Activated B cell treated with CpG ODN at 0.5 μM for 24 hours (primary cell): ENCODE measurements at regions of chr11 and their contacts with region 1.

Region 1: DNA sequence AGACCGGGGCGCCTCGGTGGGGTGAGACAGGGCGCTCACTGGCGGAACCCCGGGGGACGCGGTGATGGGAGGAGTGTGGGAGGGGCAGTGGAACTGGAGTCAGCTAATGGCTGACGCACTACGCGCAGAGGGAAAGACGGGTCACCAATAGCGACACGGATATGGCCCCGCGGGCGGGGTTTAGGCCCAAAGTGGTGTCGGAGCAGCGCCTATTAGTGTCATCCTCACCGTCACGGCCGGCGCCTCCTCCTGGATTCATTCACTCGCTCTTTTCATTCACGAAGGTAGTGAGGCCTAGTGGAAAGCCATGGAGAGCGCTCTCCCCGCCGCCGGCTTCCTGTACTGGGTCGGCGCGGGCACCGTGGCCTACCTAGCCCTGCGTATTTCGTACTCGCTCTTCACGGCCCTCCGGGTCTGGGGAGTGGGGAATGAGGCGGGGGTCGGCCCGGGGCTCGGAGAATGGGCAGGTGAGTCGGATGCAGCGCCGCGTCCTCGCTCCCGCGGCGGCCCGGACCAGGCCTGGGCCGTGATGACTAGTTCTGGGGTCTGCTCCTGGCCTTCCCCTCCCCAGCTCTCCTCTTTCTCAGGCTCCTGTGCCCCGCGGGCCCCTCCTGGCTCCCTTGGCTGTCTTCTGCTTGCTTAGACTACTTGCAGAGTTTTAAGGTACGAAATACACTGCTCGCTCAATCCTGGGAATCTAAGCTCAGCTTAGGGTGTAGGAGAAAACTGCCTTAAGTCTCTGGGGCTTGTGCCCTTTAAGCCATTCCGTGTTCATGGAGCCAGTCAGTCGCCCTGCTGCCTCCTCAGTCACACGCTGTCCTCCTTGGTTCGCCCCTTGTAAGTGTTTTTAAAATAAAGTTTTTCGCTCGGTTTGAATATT is at the start of gene HSD17B12:
- DNase-seq: peak; percentile 96
- ATAC-seq: peak; percentile 96
- H3K4me3 Mint-ChIP-seq: peak within 1 kb of the TSS; percentile 93
- H3K27ac Mint-ChIP-seq: peak within 1 kb of the TSS; percentile 92
- H3K4me1 Mint-ChIP-seq: peaks cover 38% of the 10 kb centered on the region
- H3K27me3 Mint-ChIP-seq: no peaks in the 10 kb centered on the region
- CTCF ChIP-seq: no peak
- total RNA-seq, gene HSD17B12: 56.8 and 58.3 TPM in 2 replicates

Region 2: GRCh38 chr11:43589606-43590250 is 91.0 kb before region 1 on chr11:
- CTCF ChIA-PET with region 1: no interaction called
- POLR2A ChIA-PET with region 1: no interaction called
- intact Hi-C with region 1: no loop called
- DNase-seq: no peak
- ATAC-seq: no peak
- H3K4me3 Mint-ChIP-seq: no peak overlapping the region
- H3K27ac Mint-ChIP-seq: no peak overlapping the region
- H3K4me1 Mint-ChIP-seq: no peaks in the 10 kb centered on the region
- H3K27me3 Mint-ChIP-seq: peaks cover 31% of the 10 kb centered on the region
- CTCF ChIP-seq: no peak

Region 3: DNA sequence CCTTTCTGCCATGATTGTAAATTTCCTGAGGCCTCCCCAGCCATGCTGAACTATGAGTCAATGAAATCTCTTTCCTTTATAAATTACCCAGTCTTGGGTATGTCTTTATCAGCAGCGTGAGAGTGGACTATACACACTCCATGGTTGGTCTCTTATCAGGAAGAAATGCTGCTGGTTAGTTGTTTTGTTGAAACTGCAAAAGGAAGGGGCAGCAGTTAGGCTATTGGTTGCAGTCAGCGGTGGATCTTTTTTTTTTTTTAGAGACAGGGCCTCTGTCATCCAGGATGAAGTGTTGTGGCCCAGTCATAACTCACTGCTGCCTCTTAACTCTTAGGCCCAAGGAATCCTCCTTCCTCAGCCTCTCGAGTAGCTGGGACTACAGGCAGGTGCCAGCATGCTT is 51.5 kb after region 1 on chr11:
- CTCF ChIA-PET with region 1: no interaction called
- POLR2A ChIA-PET with region 1: no interaction called
- intact Hi-C with region 1: no loop called
- DNase-seq: no peak
- ATAC-seq: no peak
- H3K4me3 Mint-ChIP-seq: no peak overlapping the region
- H3K27ac Mint-ChIP-seq: no peak overlapping the region
- H3K4me1 Mint-ChIP-seq: peaks cover 21% of the 10 kb centered on the region
- H3K27me3 Mint-ChIP-seq: no peaks in the 10 kb centered on the region
- CTCF ChIP-seq: no peak

Region 4: DNA sequence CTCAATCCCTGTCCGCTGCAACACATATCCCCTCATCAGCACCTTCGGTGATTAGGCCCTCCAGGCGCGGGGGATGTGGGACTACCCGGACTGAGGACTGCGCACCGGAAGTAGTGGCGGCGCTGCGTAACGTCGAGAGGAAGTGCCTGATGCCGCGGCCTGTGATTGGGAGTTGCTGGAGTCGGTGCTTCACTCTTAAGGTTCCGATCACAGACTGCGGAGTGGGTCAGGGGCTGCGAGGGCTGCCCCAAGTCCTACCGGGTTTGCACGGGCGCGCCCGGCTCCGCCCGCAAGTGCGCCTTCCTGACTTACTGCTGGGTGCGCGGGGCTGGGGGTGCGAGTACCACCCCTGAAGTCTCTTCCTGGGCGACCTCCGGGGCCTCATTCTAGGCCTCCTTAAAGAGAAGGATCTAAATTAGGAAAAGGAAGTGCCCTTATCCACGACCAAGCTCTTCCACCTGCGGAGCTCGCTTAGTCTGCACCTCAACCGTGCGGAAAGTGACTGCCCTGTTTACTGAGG is 199.9 kb after region 1 on chr11 and contains the start of gene ALKBH3:
- CTCF ChIA-PET with region 1: no interaction called
- POLR2A ChIA-PET with region 1: interaction called, 3 read pairs
- intact Hi-C with region 1: loop called (anchors 2 kb)
- DNase-seq: peak; percentile 83
- ATAC-seq: peak; percentile 99
- H3K4me3 Mint-ChIP-seq: peak within 1 kb of the TSS; percentile 94
- H3K27ac Mint-ChIP-seq: peak within 1 kb of the TSS; percentile 74
- H3K4me1 Mint-ChIP-seq: peaks cover 20% of the 10 kb centered on the region
- H3K27me3 Mint-ChIP-seq: peaks cover 32% of the 10 kb centered on the region
- CTCF ChIP-seq: no peak
- total RNA-seq, gene ALKBH3: 28.3 and 40.5 TPM in 2 replicates

Region 5: DNA sequence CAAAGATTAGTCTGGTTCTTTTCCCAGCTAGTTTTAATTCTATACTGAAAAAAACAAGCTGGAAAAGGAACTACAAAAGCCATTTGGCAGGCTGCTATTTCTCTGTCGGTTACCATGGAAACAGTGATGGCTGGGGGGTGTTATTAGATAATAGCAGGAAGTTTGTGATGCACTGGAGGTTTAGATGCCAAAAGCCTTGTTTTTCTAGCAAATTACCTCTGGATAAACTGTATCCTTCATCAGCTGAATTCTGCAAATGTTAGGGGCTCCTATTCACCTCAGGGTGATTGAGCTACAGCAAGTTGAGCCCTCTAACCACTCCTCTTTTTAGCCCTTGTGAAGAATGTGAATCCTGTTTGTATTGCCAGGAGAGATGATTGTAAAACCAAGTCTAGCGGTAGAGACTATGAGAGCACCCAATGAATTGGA is 225.1 kb after region 1 on chr11:
- CTCF ChIA-PET with region 1: no interaction called
- POLR2A ChIA-PET with region 1: no interaction called
- intact Hi-C with region 1: no loop called
- DNase-seq: no peak
- ATAC-seq: no peak
- H3K4me3 Mint-ChIP-seq: no peak overlapping the region
- H3K27ac Mint-ChIP-seq: no peak overlapping the region
- H3K4me1 Mint-ChIP-seq: peaks cover 8% of the 10 kb centered on the region
- H3K27me3 Mint-ChIP-seq: no peaks in the 10 kb centered on the region
- CTCF ChIP-seq: no peak

Region 6: GRCh38 chr11:44065841-44066731 is 385.3 kb after region 1 on chr11 and contains the start of gene ACCS:
- CTCF ChIA-PET with region 1: no interaction called
- POLR2A ChIA-PET with region 1: no interaction called
- intact Hi-C with region 1: loop called (anchors 1 kb)
- DNase-seq: peak; percentile 86
- ATAC-seq: peak; percentile 97
- H3K4me3 Mint-ChIP-seq: peak within 1 kb of the TSS; percentile 92
- H3K27ac Mint-ChIP-seq: peak within 1 kb of the TSS; percentile 87
- H3K4me1 Mint-ChIP-seq: peaks cover 19% of the 10 kb centered on the region
- H3K27me3 Mint-ChIP-seq: no peaks in the 10 kb centered on the region
- CTCF ChIP-seq: peak; percentile 58
- total RNA-seq, gene ACCS: 22.4 and 27.0 TPM in 2 replicates